Head of caudate nucleus (tissue), 42 donors: ENCODE measurements at regions of chr20 and their contacts with region 1.

Region 1: GRCh38 chr20:45373353-45374100 is 4.6 kb downstream of the TP53TG5 start:
- DNase-seq: peak; percentile 78 to 97 (median 92)

Region 2: GRCh38 chr20:45293041-45294002 is 80.2 kb before region 1 on chr20:
- intact Hi-C with region 1: no loop called
- DNase-seq: peak; percentile 69 to 94 (median 86)

Region 3: GRCh38 chr20:45406259-45407066 is 32.9 kb after region 1 on chr20:
- intact Hi-C with region 1: loop called (anchors 5 kb)
- DNase-seq: peak in 41 of 42 donors; percentile 42 to 92 (median 80)

Region 4: DNA sequence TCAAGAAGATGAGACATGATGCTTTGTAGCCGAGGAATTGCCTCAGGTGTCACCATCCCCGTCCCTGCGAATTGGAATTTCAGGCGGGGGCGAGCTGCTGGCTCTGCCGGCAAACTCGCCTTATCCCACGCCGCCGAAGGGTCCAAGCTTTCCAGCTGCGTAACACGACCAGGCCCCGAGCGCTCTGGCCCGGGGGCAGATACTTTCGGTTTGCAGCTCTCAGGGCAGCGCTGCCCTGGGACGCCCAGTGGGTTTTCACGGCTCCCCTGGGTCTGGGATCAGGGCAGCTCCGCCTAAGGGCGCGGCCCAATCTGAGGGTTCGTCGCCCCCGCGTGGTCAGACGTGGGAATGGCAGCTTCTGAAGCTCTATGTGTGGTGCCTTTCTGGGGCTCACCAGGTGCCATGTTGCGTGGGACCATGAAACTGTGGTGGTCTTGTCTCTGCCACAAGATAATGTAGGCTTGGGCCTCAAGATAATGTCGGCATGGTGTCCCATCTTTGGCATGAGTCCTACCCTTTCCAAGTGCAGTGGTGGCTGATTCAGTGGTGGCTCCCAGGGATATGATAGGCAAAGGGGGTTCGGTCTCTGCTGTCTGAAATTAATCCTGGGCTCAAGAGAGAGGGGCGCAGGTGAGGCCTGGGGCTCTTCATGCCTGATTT is 63.3 kb after region 1 on chr20:
- intact Hi-C with region 1: loop called (anchors 5 kb)
- DNase-seq: peak; percentile 82 to 98 (median 94)